H1 (cell line): ENCODE measurements at regions of chr13 and their contacts with region 1.

Region 1: GRCh38 chr13:29583073-29583785 is 12.3 kb downstream of the SLC7A1 start:
- DNase-seq: no peak
- H3K4me3 ChIP-seq: no peak overlapping the region
- H3K27ac ChIP-seq: no peak overlapping the region
- H3K4me1 ChIP-seq: peaks cover 18 to 31% (median 25%) of the 10 kb centered on the region in 4 experiments
- H3K27me3 ChIP-seq: no peaks in the 10 kb centered on the region
- CTCF ChIP-seq: no peak
- EP300 ChIP-seq: no peak
- POLR2A ChIP-seq: no peak
- RAD21 ChIP-seq: no peak

Region 2: DNA sequence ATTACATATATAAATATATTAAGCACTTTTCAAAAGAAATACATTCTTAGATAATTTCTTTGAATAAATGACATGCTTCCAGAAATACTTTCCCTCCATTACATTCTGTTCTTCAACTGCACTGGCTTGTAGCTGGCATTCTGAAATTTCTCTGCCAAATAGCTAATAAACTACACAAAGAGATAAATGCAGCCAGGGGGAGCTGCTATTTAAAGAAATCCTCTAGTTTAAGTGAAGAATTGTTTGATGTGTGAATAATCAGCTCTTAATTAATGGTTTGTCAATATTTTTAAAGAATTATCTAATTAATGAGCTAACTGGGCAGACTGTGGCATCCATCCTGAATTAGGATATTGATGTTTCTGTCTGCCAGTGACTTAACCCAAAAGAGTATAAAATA is 18.4 kb before region 1 on chr13:
- CTCF ChIA-PET with region 1: interaction called, 15 read pairs
- POLR2A ChIA-PET with region 1: interaction called, 11 read pairs
- DNase-seq: no peak
- H3K4me3 ChIP-seq: no peak overlapping the region
- H3K27ac ChIP-seq: no peak overlapping the region
- H3K4me1 ChIP-seq: peaks cover 7 to 27% (median 21%) of the 10 kb centered on the region in 4 experiments; a peak in 5 of 7 replicates
- H3K27me3 ChIP-seq: no peaks in the 10 kb centered on the region
- CTCF ChIP-seq: no peak
- EP300 ChIP-seq: no peak
- POLR2A ChIP-seq: no peak
- RAD21 ChIP-seq: no peak

Region 3: DNA sequence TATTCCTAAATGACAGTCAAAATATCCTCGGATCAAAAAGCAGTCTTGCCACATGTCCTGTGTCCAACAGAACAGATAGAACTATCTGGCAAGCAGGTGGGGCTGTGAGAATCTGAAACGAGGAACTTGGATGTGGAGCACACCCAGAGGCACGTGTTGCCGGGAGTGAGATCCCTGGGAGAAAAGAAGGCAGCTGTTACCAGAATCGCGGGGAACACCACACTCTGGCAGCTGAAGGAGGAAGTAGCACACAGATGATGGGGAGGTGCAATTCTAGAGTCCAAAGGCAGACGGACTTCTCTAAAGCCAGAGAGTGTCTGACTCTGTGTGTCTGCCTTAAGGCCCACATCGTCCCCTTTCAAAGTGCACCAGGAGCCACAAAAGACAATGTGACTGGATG is 10.0 kb before region 1 on chr13:
- CTCF ChIA-PET with region 1: interaction called, 5 read pairs
- POLR2A ChIA-PET with region 1: interaction called, 18 read pairs
- DNase-seq: no peak
- H3K4me3 ChIP-seq: no peak overlapping the region
- H3K27ac ChIP-seq: no peak overlapping the region
- H3K4me1 ChIP-seq: peaks cover 5 to 19% (median 14%) of the 10 kb centered on the region in 4 experiments
- H3K27me3 ChIP-seq: no peaks in the 10 kb centered on the region
- CTCF ChIP-seq: no peak
- EP300 ChIP-seq: no peak
- POLR2A ChIP-seq: no peak
- RAD21 ChIP-seq: no peak

Region 4: DNA sequence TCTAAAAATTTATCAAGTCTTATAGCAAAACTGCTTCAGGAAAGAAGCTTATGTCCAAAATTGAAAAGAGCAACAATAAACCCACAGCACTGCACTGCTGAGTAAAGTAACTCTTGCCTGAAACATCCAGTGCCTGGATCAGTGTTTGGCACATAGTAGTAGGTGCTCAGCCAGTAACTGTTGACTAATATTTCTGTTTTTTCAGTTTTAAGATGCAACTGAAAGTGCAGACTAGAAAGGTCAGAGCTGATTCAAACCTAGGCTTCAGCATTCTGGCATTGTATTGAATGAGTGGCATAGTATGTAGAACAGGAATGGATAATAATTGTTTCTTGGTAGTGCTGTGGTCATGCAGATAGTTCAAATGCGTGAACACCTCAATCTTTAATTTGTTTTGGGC is 199.6 kb after region 1 on chr13:
- CTCF ChIA-PET with region 1: no interaction called
- POLR2A ChIA-PET with region 1: no interaction called
- DNase-seq: no peak
- H3K4me3 ChIP-seq: no peak overlapping the region
- H3K27ac ChIP-seq: no peak overlapping the region
- H3K4me1 ChIP-seq: no peaks in the 10 kb centered on the region
- H3K27me3 ChIP-seq: no peaks in the 10 kb centered on the region
- CTCF ChIP-seq: no peak
- EP300 ChIP-seq: no peak
- POLR2A ChIP-seq: no peak
- RAD21 ChIP-seq: no peak